Calu3 (cell line): ENCODE measurements at regions of chr16 and their contacts with region 1.

Region 1: GRCh38 chr16:61540216-61540615 is 496.0 kb downstream of the CDH8 start:
- DNase-seq: no peak
- H3K4me3 Mint-ChIP-seq: no peak overlapping the region
- H3K27ac Mint-ChIP-seq: no peak overlapping the region
- H3K4me1 Mint-ChIP-seq: no peaks in the 10 kb centered on the region
- H3K27me3 Mint-ChIP-seq: no peaks in the 10 kb centered on the region
- CTCF ChIP-seq: no peak

Region 2: DNA sequence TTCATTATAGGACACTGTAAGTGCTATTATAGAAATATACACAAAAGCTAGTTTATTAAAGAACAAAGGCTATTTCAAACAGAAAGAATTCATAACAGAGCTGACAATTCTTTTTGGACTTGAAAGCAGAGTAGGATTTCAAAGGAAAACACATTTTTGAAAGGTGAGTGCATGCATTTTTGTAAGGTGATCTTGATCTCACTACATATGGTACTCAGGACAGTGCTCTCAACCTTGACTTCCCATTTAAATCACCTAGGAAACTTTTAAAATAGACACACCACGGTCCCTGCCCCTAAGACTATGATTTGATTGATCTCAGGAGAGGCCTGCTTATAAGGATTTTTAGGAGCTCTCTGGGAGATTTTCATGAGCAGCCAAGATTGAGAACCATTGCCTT is 866.0 kb before region 1 on chr16:
- CTCF ChIA-PET with region 1: no interaction called
- intact Hi-C with region 1: no loop called
- DNase-seq: no peak
- H3K4me3 Mint-ChIP-seq: no peak overlapping the region
- H3K27ac Mint-ChIP-seq: no peak overlapping the region
- H3K4me1 Mint-ChIP-seq: no peaks in the 10 kb centered on the region
- H3K27me3 Mint-ChIP-seq: no peaks in the 10 kb centered on the region
- CTCF ChIP-seq: no peak

Region 3: DNA sequence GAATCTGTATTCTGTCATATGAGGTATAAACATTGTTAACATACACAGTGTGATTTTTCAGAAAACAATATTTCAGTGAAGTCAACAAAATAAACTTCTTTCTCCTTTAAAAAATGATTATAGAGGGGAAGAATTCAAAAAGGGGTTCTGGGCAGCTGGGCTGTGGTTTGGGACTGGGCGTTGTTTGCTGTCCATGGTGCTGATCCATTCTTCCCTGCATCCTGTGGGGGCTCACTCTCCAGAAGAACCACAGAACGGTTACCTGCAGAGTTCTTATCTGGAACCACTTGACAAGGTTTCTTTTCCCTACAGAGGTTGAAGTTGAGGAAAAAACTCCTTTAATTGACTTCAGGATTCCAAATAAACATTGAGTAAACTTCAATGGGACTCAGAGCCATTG is 595.0 kb before region 1 on chr16:
- CTCF ChIA-PET with region 1: interaction called, 10 read pairs
- intact Hi-C with region 1: no loop called
- DNase-seq: no peak
- H3K4me3 Mint-ChIP-seq: no peak overlapping the region
- H3K27ac Mint-ChIP-seq: no peak overlapping the region
- H3K4me1 Mint-ChIP-seq: no peaks in the 10 kb centered on the region
- H3K27me3 Mint-ChIP-seq: no peaks in the 10 kb centered on the region
- CTCF ChIP-seq: no peak

Region 4: GRCh38 chr16:61780161-61780560 is 239.9 kb after region 1 on chr16:
- CTCF ChIA-PET with region 1: no interaction called
- intact Hi-C with region 1: no loop called
- DNase-seq: no peak
- H3K4me3 Mint-ChIP-seq: no peak overlapping the region
- H3K27ac Mint-ChIP-seq: no peak overlapping the region
- H3K4me1 Mint-ChIP-seq: no peaks in the 10 kb centered on the region
- H3K27me3 Mint-ChIP-seq: no peaks in the 10 kb centered on the region
- CTCF ChIP-seq: no peak